ENCODE measurements at regions of chr12 and their contacts with region 1.

Region 1: DNA sequence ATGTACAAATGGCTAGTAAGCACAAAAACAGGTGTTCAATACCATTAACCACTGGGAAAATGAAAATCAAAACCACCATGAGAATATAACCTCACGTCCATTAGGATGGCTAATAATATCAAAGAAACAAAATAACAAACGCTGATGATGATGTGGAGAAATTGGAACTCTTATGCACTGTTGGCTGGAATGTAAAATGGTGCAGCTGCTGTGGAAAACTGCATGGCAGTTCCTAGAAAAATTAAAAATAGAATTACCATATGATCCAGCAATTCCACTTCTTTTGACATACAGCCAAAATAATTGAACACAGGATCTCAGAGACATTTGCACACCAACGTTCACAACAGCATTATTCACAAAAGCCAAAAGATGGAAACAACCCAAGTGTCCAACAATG is 51.5 kb downstream of the TMPRSS12 start:
- DNase-seq: no peak
- ATAC-seq: no peak
- H3K4me3 ChIP-seq: no peak overlapping the region
- H3K4me3 Mint-ChIP-seq: no peak overlapping the region
- H3K27ac ChIP-seq: no peak overlapping the region
- H3K27ac Mint-ChIP-seq: no peak overlapping the region
- H3K4me1 ChIP-seq: no peaks in the 10 kb centered on the region
- H3K4me1 Mint-ChIP-seq: no peaks in the 10 kb centered on the region
- H3K27me3 ChIP-seq: peaks cover 0 to 6% of the 10 kb centered on the region in 2 experiments
- H3K27me3 Mint-ChIP-seq: no peaks in the 10 kb centered on the region

Region 2: DNA sequence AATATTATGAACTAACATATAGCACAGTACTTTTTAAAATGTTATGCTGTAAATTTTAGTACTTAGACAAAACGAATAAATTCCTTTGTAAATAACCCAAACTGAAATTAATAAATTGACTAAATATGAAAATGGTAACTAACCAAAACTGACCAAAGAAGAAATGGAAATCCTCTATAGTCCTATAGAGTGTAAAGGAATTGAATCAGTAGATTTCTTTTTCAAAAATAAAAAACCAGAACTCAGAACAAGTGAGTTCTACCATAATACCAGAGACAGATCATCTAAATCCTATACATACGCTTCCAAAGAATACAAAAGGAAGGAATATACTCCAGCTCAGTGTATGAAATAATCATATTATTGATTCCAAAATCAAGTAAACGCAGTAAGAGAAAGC is 11.7 kb before region 1 on chr12:
- CTCF ChIA-PET with region 1: no interaction called
- POLR2A ChIA-PET with region 1: interaction called in 1 of 2 experiments, 10 read pairs
- DNase-seq: no peak
- ATAC-seq: no peak
- H3K4me3 ChIP-seq: no peak overlapping the region
- H3K4me3 Mint-ChIP-seq: no peak overlapping the region
- H3K27ac ChIP-seq: no peak overlapping the region
- H3K27ac Mint-ChIP-seq: no peak overlapping the region
- H3K4me1 ChIP-seq: no peaks in the 10 kb centered on the region
- H3K4me1 Mint-ChIP-seq: no peaks in the 10 kb centered on the region
- H3K27me3 ChIP-seq: no peaks in the 10 kb centered on the region
- H3K27me3 Mint-ChIP-seq: no peaks in the 10 kb centered on the region